ENCODE measurements at regions of chr7 and their contacts with region 1.

Region 1: DNA sequence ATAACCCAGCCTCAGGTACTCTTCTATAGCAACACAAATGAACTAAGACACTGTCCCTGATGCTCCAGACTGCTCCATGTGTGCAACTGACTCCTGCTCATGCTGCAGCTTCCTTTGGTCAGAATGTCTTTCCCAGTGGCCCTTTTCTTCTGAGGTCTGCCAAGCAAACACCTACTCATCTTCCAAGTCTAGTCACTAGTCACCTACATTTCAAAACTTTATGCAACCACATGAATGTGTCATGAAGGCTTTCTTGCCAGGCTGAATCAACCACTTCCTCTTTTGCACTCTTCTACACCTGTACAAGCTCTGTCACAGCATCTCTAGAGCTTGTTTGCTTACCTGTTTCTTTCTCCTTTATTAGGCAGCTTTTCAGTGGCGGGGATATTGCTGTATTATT is 75.8 kb downstream of the LSMEM1 start:
- DNase-seq: peak; percentile 20
- ATAC-seq: peak; percentile 91
- H3K4me3 ChIP-seq: no peak overlapping the region
- H3K27ac ChIP-seq: no peak overlapping the region
- H3K4me1 ChIP-seq: no peaks in the 10 kb centered on the region
- H3K27me3 ChIP-seq: no peaks in the 10 kb centered on the region
- CTCF ChIP-seq: no peak
- EP300 ChIP-seq: no peak; a peak in 1 of 4 replicates
- POLR2A ChIP-seq: no peak
- RAD21 ChIP-seq: no peak

Region 2: DNA sequence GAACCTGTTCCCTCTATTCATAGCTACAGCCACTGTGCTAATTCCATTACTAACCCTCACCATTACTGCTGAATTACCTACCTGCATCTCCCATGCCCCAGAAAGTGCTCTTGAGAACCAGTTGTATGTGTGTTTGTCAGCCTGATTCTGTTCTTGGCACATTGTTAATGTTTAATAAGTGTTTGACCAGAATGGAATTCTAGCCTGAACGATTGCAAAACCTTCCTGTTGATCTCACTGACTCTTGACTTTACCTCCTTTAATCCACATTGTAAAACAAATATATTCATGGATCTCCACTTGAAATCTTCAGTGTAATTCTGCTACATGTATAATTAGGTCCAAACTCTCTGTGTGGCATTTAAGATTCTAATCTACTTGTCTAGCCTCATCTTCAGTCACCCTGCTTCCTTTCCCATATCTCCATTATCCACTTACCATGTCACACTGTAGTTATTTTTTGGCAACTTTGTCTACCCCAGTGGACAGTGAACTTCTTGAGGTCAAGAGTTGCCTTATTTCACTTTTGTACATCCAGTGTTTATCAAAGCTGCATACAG is 345.2 kb before region 1 on chr7:
- CTCF ChIA-PET with region 1: no interaction called
- POLR2A ChIA-PET with region 1: no interaction called
- RAD21 ChIA-PET with region 1: no interaction called
- SMC1A ChIA-PET with region 1: no interaction called
- in situ Hi-C with region 1: no loop called
- intact Hi-C with region 1: no loop called
- DNase-seq: no peak
- ATAC-seq: no peak
- H3K4me3 ChIP-seq: no peak overlapping the region
- H3K27ac ChIP-seq: no peak overlapping the region
- H3K4me1 ChIP-seq: no peaks in the 10 kb centered on the region
- H3K27me3 ChIP-seq: no peaks in the 10 kb centered on the region
- CTCF ChIP-seq: no peak
- EP300 ChIP-seq: no peak
- POLR2A ChIP-seq: no peak
- RAD21 ChIP-seq: no peak

Region 3: GRCh38 chr7:112789817-112790585 is 233.4 kb after region 1 on chr7 and contains the start of gene TMEM168:
- CTCF ChIA-PET with region 1: no interaction called
- POLR2A ChIA-PET with region 1: no interaction called
- RAD21 ChIA-PET with region 1: no interaction called
- SMC1A ChIA-PET with region 1: no interaction called
- in situ Hi-C with region 1: no loop called
- intact Hi-C with region 1: no loop called
- DNase-seq: peak; percentile 30
- ATAC-seq: peak; percentile 92
- H3K4me3 ChIP-seq: peak within 1 kb of the TSS; percentile 85
- H3K27ac ChIP-seq: peak within 1 kb of the TSS; percentile 94
- H3K4me1 ChIP-seq: peaks cover 7% of the 10 kb centered on the region; the same call in 1 of the 2 replicates
- H3K27me3 ChIP-seq: no peaks in the 10 kb centered on the region
- CTCF ChIP-seq: 0 out of 6 replicates have a peak, but pooled peaks of 1 of the 3 experiments have one; percentile 4
- EP300 ChIP-seq: no peak
- POLR2A ChIP-seq: peak; percentile 97
- RAD21 ChIP-seq: no peak
- polyA plus RNA-seq, gene TMEM168: 9.1 to 14.4 TPM

Region 4: DNA sequence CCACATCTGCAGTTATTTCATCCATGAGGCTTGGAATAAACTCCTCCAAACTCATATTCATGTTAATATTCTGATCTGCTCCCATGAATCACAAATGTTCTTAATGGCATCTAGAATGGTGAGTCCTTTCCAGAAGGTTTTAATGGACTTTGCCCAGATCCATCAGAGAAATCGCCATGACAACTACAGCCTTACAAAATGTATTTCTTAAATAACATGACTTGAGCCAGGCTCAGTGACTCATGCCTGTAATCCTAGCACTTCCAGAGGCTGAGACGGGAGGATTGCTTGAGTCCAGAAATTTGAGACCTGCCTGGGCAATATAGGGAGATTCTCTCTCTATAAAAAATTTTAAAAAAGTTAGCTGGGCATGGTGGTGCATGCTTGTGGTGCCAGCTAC is 335.6 kb after region 1 on chr7:
- CTCF ChIA-PET with region 1: interaction called, 3 read pairs
- POLR2A ChIA-PET with region 1: interaction called, 7 read pairs
- RAD21 ChIA-PET with region 1: interaction called, 7 read pairs
- SMC1A ChIA-PET with region 1: interaction called, 3 read pairs
- in situ Hi-C with region 1: loop called (anchors 5 kb)
- intact Hi-C with region 1: no loop called
- DNase-seq: no peak
- ATAC-seq: no peak
- H3K4me3 ChIP-seq: no peak overlapping the region
- H3K27ac ChIP-seq: no peak overlapping the region
- H3K4me1 ChIP-seq: no peaks in the 10 kb centered on the region
- H3K27me3 ChIP-seq: no peaks in the 10 kb centered on the region
- CTCF ChIP-seq: no peak
- EP300 ChIP-seq: no peak
- POLR2A ChIP-seq: no peak
- RAD21 ChIP-seq: no peak